Posterior cingulate gyrus (tissue), 11 donors: ENCODE measurements at regions of chr12 and their contacts with region 1.

Region 1: DNA sequence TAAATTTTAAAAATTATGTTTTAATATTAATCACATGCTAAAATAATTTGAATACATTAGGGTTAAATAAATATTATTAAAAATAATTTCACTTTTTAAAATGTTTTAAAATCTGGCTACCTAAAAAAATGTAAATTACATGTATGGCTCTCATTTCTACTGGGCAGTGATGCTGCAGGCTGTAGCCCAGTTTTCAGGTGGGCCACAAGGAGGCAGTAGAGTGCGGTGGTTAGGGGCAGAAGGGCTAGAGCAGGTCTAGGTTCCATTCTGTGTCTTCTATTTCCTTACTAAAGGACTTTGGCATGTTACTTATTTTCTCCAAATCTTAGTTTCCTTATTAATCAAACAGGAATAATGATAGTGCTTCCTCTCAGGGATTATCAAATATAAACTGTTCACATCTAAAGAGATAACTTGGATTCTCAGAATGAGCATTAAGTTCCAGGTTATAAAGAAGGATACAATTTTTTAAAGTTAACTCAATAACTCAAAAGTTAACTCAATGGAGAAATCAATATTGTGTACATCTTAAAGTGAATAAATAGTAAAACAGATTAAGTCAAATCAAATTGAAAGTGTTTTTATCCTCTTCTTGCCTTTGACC is 54.9 kb upstream of the OVCH1 start:
- DNase-seq: peak; percentile 36 to 92 (median 64)

Region 2: GRCh38 chr12:29164477-29165393 is 387.7 kb before region 1 on chr12:
- intact Hi-C with region 1: no loop called
- DNase-seq: no peak

Region 3: GRCh38 chr12:29640589-29641345 is 88.3 kb after region 1 on chr12:
- intact Hi-C with region 1: no loop called
- DNase-seq: peak in 2 of 10 donors; percentile 8 to 66

Region 4: DNA sequence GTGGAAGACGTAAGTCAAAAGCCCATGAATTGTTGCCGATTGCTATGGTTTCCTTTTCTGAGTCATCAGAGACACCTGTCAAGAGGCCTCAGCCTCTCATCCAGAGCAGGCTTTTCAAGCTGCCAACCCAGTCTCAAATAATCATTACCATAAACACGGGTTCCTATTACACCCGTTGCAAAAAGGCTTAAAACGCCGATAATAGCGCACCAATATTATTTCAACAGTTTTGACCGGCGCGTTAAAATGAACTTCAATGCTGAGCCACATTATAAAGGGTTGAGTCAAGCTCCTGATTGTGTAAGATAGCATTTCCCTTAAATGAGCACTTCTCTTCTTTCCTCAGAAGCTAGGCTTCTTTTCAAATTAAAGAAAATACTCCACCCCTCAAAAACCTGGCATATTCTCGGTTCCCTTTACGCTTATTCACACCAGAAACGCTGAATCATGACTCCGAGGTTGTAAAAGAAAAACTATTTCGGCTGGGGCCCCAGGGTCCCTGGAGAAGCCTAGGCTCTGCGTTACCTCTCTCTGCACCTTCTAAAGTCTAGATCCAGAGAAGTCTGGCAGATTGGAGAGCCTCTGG is 230.0 kb after region 1 on chr12:
- intact Hi-C with region 1: loop called (anchors 5 kb)
- DNase-seq: no peak